Heart right ventricle (tissue), 16 donors: ENCODE measurements at regions of chr21 and their contacts with region 1.

Region 1: GRCh38 chr21:19340303-19340702 is 936.7 kb upstream of the TMPRSS15 start:
- DNase-seq: no peak
- ATAC-seq: no peak
- H3K4me3 ChIP-seq: no peak overlapping the region
- H3K27ac ChIP-seq: no peak overlapping the region
- H3K4me1 ChIP-seq: no peaks in the 10 kb centered on the region
- H3K27me3 ChIP-seq: no peaks in the 10 kb centered on the region
- CTCF ChIP-seq: no peak

Region 2: GRCh38 chr21:17859661-17860060 is 1480.6 kb before region 1 on chr21:
- intact Hi-C with region 1: loop called in 1 of 10 experiments (anchors 10 kb)
- DNase-seq: no peak
- ATAC-seq: no peak
- H3K4me3 ChIP-seq: no peak overlapping the region
- H3K27ac ChIP-seq: no peak overlapping the region
- H3K4me1 ChIP-seq: no peaks in the 10 kb centered on the region
- H3K27me3 ChIP-seq: peaks cover 0 to 4% (median 0%) of the 10 kb centered on the region in 7 donors
- CTCF ChIP-seq: no peak

Region 3: GRCh38 chr21:18705971-18706370 is 634.3 kb before region 1 on chr21:
- intact Hi-C with region 1: no loop called
- DNase-seq: no peak
- ATAC-seq: no peak
- H3K4me3 ChIP-seq: no peak overlapping the region
- H3K27ac ChIP-seq: no peak overlapping the region
- H3K4me1 ChIP-seq: no peaks in the 10 kb centered on the region
- H3K27me3 ChIP-seq: no peaks in the 10 kb centered on the region
- CTCF ChIP-seq: no peak

Region 4: DNA sequence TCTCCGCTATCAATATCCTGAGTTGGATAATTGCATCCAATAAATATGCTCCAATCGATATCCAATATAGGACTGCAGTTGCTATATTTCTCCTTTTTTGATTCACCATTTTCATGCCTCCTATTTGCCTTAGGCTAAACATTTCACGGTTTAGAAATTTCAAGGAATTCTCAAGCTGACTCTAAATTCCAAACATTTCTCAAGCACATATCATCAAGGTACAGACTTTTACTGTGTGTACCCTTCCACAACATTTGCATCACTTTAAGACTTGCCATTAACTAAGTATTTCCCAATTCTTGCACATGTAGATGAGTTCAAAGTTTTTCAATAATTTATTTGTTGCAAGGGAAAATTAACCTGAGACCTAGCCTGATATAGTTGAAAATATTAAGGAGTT is 141.5 kb before region 1 on chr21:
- intact Hi-C with region 1: no loop called
- DNase-seq: no peak
- ATAC-seq: no peak
- H3K4me3 ChIP-seq: no peak overlapping the region
- H3K27ac ChIP-seq: no peak overlapping the region
- H3K4me1 ChIP-seq: no peaks in the 10 kb centered on the region
- H3K27me3 ChIP-seq: no peaks in the 10 kb centered on the region
- CTCF ChIP-seq: no peak

Region 5: DNA sequence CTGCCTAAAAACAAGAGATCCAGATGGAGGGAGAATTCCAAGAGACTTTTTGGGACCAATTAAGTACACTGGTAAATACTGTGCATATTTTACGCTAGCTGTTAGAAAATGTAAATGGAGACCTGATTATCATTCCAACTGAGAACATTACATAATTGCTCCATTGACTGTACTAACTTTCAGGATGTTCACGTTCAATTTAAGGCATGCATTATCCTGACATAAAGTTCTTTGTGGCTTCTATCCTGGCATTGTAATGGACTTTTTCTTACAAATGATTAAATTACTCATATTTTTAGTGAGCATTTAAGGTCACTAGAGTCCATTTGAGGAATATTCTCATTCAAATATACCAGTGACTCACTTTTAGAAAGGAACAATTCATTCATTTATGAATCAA is 53.4 kb before region 1 on chr21:
- intact Hi-C with region 1: loop called in 1 of 10 experiments (anchors 10 kb)
- DNase-seq: no peak
- ATAC-seq: no peak
- H3K4me3 ChIP-seq: no peak overlapping the region
- H3K27ac ChIP-seq: no peak overlapping the region
- H3K4me1 ChIP-seq: no peaks in the 10 kb centered on the region
- H3K27me3 ChIP-seq: no peaks in the 10 kb centered on the region
- CTCF ChIP-seq: no peak